ENCODE measurements at regions of chr10 and their contacts with region 1.

Region 1: GRCh38 chr10:31928549-31929260 is at the start of gene ARHGAP12:
- DNase-seq: peak; percentile 97
- ATAC-seq: peak; percentile 98
- total RNA-seq, gene ARHGAP12: 21.5 TPM

Region 2: GRCh38 chr10:31847515-31847914 is 81.2 kb before region 1 on chr10:
- intact Hi-C with region 1: no loop called
- DNase-seq: peak; percentile 30
- ATAC-seq: no peak

Region 3: DNA sequence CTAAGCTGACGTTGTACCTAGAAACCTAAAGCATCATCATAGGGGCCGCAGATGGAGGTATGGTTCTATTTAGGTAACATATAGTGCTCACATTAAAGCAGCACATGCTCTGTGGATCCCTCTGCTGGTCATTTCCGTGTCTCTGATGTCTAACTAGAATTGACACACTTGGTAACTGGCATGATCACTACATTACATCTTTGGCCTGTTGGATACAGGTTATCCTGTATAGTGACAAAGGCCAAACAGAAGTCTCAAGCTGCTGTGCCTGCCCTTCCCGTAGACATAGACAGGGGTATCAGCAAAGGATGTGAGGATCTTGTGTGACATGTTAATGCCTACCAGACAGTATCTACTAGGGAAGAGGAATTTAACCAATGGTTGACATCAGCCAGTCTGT is 76.3 kb after region 1 on chr10:
- intact Hi-C with region 1: loop called (anchors 5 kb)
- DNase-seq: no peak
- ATAC-seq: peak; percentile 28

Measured in Right ventricle myocardium inferior (tissue), 1 donor.